ENCODE measurements at regions of chr19 and their contacts with region 1.

Region 1: GRCh38 chr19:13833330-13834243 is 38.3 kb downstream of the ZSWIM4 start:
- DNase-seq: peak; percentile 90
- H3K4me3 Mint-ChIP-seq: peak overlapping the region; percentile 74
- H3K27ac Mint-ChIP-seq: peak overlapping the region; percentile 90
- H3K4me1 Mint-ChIP-seq: peaks cover 28% of the 10 kb centered on the region
- H3K27me3 Mint-ChIP-seq: no peaks in the 10 kb centered on the region

Region 2: DNA sequence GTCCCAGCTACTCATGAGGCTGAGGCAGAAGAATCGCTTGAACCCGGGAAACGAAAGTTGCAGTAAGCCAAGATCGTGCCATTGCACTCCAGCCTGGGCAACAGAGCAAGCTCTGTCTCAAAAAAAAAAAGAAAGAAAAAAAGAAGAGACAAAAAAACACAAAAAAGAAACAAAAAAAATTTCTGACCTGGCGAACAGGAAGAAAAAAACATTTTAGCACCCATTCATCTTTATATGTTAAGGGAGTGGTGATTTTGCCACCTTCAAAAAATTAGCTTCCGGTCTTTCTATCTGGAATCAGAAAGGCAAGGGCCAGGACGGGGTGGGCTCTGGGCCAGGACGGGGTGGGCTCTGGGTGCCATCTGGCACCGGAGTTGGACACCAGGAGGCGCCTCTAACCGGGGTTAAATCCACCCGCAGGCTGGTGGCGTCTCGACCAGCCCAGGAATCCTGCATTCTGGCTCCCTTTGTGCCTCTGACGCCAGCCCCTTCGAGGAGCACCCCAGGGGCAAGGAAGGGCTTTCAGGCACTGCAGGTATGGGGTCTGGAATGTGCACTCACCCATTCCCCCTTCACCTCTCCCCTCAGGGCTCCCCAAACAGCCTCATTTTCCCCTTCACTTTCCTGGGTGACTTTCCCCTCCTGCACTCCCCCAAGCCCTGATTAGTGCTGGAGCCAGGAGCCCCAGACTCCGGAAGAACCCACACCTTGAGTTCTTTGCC is 48.7 kb before region 1 on chr19:
- intact Hi-C with region 1: loop called (anchors 2 kb)
- DNase-seq: peak; percentile 53
- H3K4me3 Mint-ChIP-seq: no peak overlapping the region
- H3K27ac Mint-ChIP-seq: peak overlapping the region; percentile 51
- H3K4me1 Mint-ChIP-seq: peaks cover 18% of the 10 kb centered on the region
- H3K27me3 Mint-ChIP-seq: no peaks in the 10 kb centered on the region

Region 3: DNA sequence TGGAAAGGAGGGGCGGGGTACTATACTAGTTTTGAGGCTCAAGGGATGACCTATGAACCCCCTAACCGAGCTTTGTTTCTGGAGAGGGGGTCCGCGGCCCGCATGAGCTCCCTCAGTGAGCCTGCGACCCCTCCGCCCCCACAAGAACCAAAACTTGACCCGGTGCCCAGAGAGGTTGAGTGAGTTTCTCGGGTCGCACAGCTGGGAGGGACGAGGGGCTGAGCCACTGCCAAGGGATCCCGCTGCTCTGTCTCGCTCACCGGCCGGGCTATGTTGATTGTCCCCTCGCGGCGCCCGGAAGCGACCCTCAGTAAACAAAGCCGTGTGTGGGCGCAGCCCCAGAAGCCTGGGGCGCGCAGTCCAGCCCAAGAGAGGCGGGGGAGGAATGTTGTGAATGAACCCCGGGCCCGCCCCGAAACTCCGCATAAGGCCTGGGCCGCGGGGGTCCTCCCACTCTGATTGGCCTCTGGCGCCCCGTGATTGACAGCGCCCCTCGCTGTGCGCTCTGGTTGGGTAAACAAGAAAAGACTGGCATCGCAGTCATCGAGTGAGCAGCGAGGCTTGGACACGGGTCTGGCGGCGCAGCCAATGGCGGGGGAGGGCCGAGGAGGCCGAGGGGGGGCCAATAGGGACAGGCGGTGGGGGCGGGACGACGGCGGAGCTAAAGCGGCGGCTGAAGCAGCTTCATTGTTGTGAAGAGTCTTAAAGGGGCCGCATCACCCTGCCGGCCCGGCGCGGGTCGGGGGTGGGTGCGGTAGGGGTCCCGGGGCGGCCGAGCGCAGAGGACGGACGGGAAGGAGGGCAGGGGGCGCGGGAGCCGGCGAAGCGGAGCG is 38.6 kb before region 1 on chr19 and contains the start of gene ZSWIM4:
- intact Hi-C with region 1: loop called (anchors 1 kb)
- DNase-seq: peak; percentile 95
- H3K4me3 Mint-ChIP-seq: peak within 1 kb of the TSS; percentile 97
- H3K27ac Mint-ChIP-seq: peak within 1 kb of the TSS; percentile 89
- H3K4me1 Mint-ChIP-seq: peaks cover 15% of the 10 kb centered on the region
- H3K27me3 Mint-ChIP-seq: no peaks in the 10 kb centered on the region
- total RNA-seq, gene ZSWIM4: 9.8 and 10.6 TPM in 2 replicates

Region 4: DNA sequence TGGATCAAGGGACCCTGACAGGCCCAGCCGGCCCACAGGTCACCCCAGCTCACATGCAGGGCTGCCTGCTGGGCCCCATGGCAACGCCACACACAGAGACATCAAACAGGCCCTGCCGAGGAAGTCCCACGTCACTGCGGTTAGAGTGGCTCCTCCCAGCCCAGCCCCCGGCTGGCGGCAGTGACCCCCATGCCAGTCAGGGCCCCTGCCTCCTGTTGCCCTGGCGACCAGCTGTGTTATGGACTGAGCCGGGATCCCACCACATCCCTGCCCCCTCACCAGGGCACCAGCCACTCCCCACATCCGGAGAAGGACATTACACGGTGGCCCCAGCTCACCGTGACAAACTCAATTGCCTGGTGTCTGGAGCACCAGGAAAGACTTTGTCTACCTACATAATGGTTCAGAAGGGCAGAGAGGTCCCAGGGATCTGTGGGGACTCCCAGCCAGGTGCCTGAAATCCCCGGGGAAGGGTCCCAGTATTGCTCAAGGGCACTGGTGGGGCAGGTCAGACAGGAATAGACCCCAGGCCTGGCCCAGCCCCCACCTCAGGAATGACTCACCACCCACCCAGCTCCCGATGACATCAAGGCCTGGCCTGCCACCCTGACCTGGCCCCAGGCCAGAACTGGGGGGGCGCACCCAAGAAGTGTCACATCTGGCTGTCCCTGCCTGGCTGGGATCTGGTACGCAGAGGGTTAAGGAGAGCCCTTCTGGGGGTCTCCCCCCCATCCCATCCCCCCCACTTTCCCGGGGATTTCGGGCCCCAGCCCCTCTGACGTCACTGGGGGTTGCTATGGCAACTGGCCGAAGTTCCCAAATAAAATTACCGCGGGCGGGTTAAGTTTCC is 13.2 kb after region 1 on chr19:
- intact Hi-C with region 1: loop called (anchors 2 kb)
- DNase-seq: peak; percentile 96
- H3K4me3 Mint-ChIP-seq: peak overlapping the region; percentile 75
- H3K27ac Mint-ChIP-seq: peak overlapping the region; percentile 99
- H3K4me1 Mint-ChIP-seq: peaks cover 44% of the 10 kb centered on the region
- H3K27me3 Mint-ChIP-seq: no peaks in the 10 kb centered on the region